ENCODE measurements at regions of chr7 and their contacts with region 1.

Region 1: DNA sequence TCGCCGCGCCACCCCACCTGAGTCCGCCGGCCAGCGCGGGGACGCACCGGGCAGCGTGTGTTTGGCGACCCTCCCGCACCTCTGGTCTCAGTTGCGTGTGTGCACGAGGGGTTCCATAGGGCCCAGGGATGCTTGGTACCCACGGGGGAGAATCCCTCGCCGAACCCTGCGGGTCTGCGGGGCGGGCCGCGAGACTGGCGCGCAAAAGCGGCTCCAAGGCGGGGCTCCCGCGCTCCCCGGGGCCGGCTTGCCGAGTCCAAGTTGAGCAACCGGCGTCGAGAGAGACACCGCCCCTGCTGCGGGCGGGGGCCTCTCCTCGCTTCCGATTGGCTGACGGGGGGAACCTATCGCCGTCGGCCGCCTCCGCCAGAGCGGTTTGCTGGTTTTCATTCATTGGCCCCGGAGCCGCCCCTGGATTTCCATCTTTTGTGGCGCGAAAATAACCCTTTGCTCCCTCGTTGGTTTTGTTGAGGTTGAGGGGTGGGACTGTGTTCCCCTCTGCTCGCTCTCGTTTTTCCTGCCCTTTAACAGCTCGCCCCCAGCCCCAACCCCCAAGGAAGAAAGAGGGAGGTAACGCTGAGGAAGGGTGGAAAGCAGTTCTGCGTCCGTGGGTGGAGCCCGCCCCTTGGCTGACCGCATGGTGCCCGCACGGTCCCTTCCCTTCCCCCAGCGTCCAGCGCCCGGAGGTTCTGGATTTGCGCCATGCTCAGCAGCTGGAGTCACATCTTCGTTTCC is 4.0 kb upstream of the IGF2BP3 start:
- DNase-seq: peak; percentile 94 to 95
- H3K4me3 ChIP-seq: peak overlapping the region; percentile 73 to 95 (median 80)
- H3K27ac ChIP-seq: peak overlapping the region; percentile 96
- H3K4me1 ChIP-seq: peaks cover 0 to 8% (median 4%) of the 10 kb centered on the region in 4 experiments; a peak in 2 of 7 replicates
- H3K27me3 ChIP-seq: no peaks in the 10 kb centered on the region
- CTCF ChIP-seq: no peak
- EP300 ChIP-seq: no peak
- POLR2A ChIP-seq: peak in 1 of 2 experiments; percentile 98; a peak in 2 of 3 replicates
- RAD21 ChIP-seq: peak in 1 of 2 experiments; percentile 16; a peak in 1 of 4 replicates

Region 2: DNA sequence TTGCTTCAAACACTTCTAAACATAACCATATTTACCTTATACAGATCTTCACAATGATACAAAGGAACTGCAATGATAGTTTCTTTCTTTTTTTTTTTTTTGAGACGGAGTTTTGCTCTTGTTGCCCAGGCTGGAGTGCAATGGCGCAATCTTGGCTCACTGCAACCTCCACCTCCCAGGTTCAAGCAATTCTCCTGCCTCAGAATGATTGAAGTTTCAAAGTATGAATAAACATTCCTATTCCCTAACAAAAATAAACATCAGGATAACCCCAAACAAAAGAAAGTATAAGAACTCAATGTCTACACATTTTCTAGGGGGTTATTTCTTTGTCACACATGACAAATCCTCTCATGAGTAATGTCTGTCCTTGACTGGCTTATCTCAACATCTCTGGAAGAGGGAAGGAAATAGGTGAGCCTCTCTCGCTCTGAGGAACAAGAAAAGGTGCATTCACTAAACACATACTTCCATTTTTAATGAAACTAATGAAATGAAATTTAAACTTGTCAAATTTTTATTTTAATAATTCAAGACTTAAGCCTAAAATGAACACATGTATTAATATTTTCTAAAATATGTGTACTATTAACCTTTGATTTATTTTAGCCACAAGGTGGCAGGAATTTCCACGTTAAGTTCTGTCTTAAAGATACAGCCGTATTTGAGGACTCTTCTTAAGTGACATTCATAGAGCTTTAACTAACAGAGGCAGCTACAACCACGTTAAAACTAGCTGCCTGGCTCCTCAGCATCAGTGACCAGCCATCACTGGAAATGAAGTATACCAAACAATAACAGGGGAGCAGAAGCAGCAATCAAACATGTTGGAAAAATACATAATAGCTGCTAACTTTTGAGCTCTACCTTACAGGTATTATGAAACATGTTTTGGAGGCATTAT is 116.8 kb before region 1 on chr7:
- CTCF ChIA-PET with region 1: interaction called, 5 read pairs
- POLR2A ChIA-PET with region 1: interaction called, 12 read pairs
- DNase-seq: no peak
- H3K4me3 ChIP-seq: no peak overlapping the region
- H3K27ac ChIP-seq: no peak overlapping the region
- H3K4me1 ChIP-seq: no peaks in the 10 kb centered on the region
- H3K27me3 ChIP-seq: no peaks in the 10 kb centered on the region
- CTCF ChIP-seq: peak in 2 of 3 experiments; percentile 5 to 6; a peak in 2 of 4 replicates
- EP300 ChIP-seq: no peak
- POLR2A ChIP-seq: no peak
- RAD21 ChIP-seq: peak; percentile 26 to 31; a peak in 3 of 4 replicates

Region 3: GRCh38 chr7:23431702-23432199 is 42.5 kb before region 1 on chr7:
- CTCF ChIA-PET with region 1: interaction called, 5 read pairs
- POLR2A ChIA-PET with region 1: interaction called, 12 read pairs
- DNase-seq: no peak
- H3K4me3 ChIP-seq: no peak overlapping the region
- H3K27ac ChIP-seq: no peak overlapping the region
- H3K4me1 ChIP-seq: peaks cover 0 to 14% (median 8%) of the 10 kb centered on the region in 4 experiments; a peak in 4 of 7 replicates
- H3K27me3 ChIP-seq: no peaks in the 10 kb centered on the region
- CTCF ChIP-seq: no peak
- EP300 ChIP-seq: no peak
- POLR2A ChIP-seq: no peak
- RAD21 ChIP-seq: no peak

Region 4: DNA sequence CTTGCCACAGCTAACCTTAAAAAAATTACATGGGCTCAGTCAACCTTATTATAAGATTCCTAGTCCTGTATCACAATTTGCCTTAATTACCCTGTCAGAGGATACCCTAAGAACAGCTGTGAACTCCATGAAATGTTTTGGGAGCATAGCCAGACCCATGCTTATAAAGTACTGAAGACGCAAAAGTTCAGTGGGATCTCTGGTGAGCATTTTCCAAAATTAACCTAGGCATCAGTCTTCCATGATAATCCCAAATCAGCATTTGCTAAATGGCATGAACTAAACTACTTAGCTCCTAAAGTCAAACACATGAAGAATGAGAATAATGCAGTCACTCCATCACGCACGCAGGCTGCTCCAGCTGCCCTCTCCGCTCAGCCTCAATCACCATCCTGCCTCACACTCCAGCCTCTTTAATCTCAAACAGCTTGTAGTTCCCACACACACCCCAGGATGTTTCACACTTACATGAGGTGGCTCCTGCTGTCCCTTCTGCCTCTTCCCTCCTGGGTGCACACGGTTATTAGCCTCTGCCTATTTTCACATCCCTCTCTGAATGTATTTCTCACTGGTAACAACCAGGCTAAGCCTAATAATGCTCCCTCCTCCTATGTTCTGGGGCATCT is 19.3 kb before region 1 on chr7:
- CTCF ChIA-PET with region 1: interaction called, 3 read pairs
- POLR2A ChIA-PET with region 1: interaction called, 15 read pairs
- DNase-seq: no peak
- H3K4me3 ChIP-seq: no peak overlapping the region
- H3K27ac ChIP-seq: no peak overlapping the region
- H3K4me1 ChIP-seq: peaks cover 0 to 14% (median 10%) of the 10 kb centered on the region in 4 experiments; a peak in 6 of 7 replicates
- H3K27me3 ChIP-seq: no peaks in the 10 kb centered on the region
- CTCF ChIP-seq: no peak
- EP300 ChIP-seq: no peak
- POLR2A ChIP-seq: peak in 1 of 2 experiments; percentile 35; a peak in 1 of 3 replicates
- RAD21 ChIP-seq: no peak

Region 5: DNA sequence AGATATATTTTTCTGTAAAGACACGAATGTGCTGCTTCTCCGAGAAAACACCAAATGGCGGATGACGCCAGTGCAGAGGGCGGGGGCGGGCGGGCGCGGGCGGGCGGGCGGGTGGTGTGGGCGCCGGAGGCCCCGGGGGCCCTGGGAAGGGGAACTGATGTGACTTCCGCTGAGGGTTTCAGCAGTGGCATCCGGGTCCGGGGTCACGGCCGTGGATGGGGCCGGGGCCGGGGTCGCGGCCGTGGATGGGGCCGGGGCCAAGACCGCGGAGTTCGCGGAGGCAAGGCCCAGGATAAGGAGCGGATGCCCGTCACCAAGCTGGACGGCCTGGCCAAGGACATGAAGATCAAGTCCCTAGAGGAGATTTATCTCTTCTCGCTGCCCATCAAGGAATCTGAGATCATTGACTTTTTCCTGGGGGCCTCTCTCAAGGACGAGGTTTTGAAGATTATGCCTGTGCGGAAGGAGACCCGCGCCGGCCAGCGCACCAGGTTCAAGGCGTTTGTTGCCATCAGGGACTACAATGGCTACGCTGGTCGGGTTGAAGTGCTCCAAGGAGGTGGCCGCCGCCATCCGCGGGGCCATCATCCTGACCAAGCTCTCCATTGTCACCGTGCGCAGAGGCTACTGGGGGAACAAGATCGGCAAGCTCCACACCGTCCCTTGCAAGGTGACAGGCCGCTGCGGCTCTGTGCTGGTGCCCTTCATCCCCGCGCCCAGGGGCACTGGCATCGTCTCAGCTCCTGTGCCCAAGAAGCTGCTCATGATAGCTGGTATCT is 16.3 kb after region 1 on chr7:
- CTCF ChIA-PET with region 1: interaction called, 4 read pairs
- POLR2A ChIA-PET with region 1: interaction called, 68 read pairs
- DNase-seq: peak in 1 of 2 experiments; percentile 48
- H3K4me3 ChIP-seq: peak overlapping the region in 3 of 4 experiments; percentile 48 to 64 (median 50); a peak in 6 of 8 replicates
- H3K27ac ChIP-seq: 0 out of 2 replicates have a peak overlapping the region, but pooled peaks have one; percentile 8
- H3K4me1 ChIP-seq: peaks cover 0 to 4% (median 3%) of the 10 kb centered on the region in 4 experiments; a peak in 5 of 7 replicates
- H3K27me3 ChIP-seq: no peaks in the 10 kb centered on the region
- CTCF ChIP-seq: no peak
- EP300 ChIP-seq: no peak
- POLR2A ChIP-seq: no peak; a peak in 1 of 3 replicates
- RAD21 ChIP-seq: no peak

Region 6: DNA sequence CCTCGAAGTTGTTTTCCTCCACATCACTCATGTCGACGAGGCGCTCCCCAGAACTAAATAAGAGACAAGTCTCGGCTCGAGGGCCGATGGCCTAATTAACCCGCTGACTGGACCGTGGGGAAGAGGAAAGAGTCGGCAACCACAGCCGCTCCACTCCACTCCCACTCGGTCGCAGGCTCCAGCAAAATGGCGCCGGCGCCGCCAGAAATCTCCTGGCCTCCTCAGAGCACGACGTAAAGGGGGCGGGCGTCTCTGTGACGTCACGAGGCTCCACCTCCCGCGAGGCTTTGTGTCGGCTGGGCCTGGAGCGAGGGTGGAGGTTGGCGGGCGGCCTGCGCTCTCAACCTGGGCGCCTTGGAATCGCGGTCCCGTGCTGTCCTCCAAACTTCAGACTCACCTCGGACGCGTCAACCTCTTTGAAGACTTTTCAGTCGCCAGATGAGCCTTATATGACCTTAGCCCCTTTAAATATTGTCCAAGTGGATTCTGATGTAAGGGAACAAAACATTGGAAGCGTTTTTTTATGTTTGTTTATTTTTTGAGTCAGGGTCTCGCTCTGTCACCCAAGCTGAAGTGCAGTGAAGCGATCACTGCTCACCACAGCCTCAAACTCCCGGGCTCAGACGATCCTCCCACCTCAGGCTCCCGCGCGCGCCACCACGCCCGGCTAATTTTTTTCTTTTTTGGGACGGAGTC is 57.7 kb after region 1 on chr7 and contains the start of gene TRA2A:
- CTCF ChIA-PET with region 1: no interaction called
- POLR2A ChIA-PET with region 1: interaction called, 52 read pairs
- DNase-seq: peak; percentile 86 to 99
- H3K4me3 ChIP-seq: peak within 1 kb of the TSS; percentile 89 to 100 (median 100)
- H3K27ac ChIP-seq: peak within 1 kb of the TSS; percentile 100
- H3K4me1 ChIP-seq: peaks cover 0 to 10% (median 5%) of the 10 kb centered on the region in 4 experiments; a peak in 5 of 7 replicates
- H3K27me3 ChIP-seq: no peaks in the 10 kb centered on the region
- CTCF ChIP-seq: no peak
- EP300 ChIP-seq: no peak
- POLR2A ChIP-seq: peak; percentile 97 to 99
- RAD21 ChIP-seq: no peak
- total RNA-seq, gene TRA2A: 122 and 125 TPM in 2 replicates

Region 7: GRCh38 chr7:23586159-23586558 is 111.9 kb after region 1 on chr7:
- CTCF ChIA-PET with region 1: no interaction called
- POLR2A ChIA-PET with region 1: no interaction called
- DNase-seq: no peak
- H3K4me3 ChIP-seq: no peak overlapping the region
- H3K27ac ChIP-seq: no peak overlapping the region
- H3K4me1 ChIP-seq: no peaks in the 10 kb centered on the region
- H3K27me3 ChIP-seq: no peaks in the 10 kb centered on the region
- CTCF ChIP-seq: no peak
- EP300 ChIP-seq: no peak
- POLR2A ChIP-seq: no peak
- RAD21 ChIP-seq: no peak

Region 8: DNA sequence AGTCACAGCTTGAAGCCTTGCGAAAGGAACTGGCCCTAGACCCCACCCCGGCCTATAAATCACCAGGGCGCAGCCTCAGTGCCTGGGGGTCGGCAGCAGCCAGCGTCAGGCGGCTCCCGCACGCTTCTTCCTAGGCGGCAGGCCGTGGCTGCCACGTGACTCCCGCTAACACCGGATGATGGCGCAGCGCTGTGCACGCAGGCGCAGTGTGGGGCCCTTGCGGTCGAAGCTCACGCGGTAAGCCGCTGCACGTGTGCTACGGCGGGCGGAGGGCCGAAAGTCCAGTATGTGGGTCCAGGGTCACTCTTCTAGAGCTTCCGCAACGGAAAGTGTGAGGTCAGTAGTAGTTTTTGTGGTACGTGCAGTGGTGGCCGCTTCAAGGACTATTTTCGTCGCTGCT is 235.7 kb after region 1 on chr7 and contains the start of gene STK31:
- CTCF ChIA-PET with region 1: no interaction called
- POLR2A ChIA-PET with region 1: no interaction called
- DNase-seq: no peak
- H3K4me3 ChIP-seq: no peak within 1 kb of the TSS
- H3K27ac ChIP-seq: no peak within 1 kb of the TSS
- H3K4me1 ChIP-seq: no peaks in the 10 kb centered on the region
- H3K27me3 ChIP-seq: no peaks in the 10 kb centered on the region
- CTCF ChIP-seq: no peak
- EP300 ChIP-seq: no peak
- POLR2A ChIP-seq: no peak
- RAD21 ChIP-seq: no peak
- total RNA-seq, gene STK31: 0.10 and 0.32 TPM in 2 replicates